ENCODE measurements at regions of chr3 and their contacts with region 1.

Region 1: DNA sequence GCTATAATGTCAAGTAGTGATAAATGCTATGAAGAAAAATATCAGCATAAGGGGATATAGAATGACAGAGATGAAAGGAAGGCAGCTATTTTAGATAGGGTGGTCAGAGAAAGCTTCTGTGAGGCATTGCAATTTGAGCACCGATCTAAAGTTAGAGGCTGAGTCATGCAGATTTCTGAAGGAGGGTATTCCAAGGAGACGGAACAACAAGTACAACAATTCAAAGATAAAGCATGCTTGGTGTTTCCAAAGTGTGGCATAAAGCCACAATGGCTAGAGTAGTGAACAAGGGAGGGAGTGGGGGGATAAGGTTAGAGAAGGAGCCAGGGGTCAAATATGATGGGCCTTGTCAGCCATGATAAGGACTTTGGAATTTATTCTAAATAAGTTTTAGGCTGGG is 71.9 kb downstream of the PFN2 start:
- DNase-seq: no peak
- H3K4me3 ChIP-seq: no peak overlapping the region
- H3K27ac ChIP-seq: peak overlapping the region in 44 of 59 donors; percentile 2 to 74 (median 42)
- H3K27me3 ChIP-seq: no peaks in the 10 kb centered on the region
- CTCF ChIP-seq: no peak

Region 2: GRCh38 chr3:149812606-149813366 is 86.0 kb before region 1 on chr3 and contains the start of gene RNF13:
- intact Hi-C with region 1: loop called in 1 of 2 experiments (anchors 5 kb)
- DNase-seq: peak; percentile 98 to 100 (median 99)
- H3K4me3 ChIP-seq: peak within 1 kb of the TSS; percentile 53 to 96 (median 88)
- H3K27ac ChIP-seq: peak within 1 kb of the TSS; percentile 95 to 100 (median 99)
- H3K27me3 ChIP-seq: no peaks in the 10 kb centered on the region
- CTCF ChIP-seq: peak in 7 of 56 donors; percentile 6 to 38 (median 13)
- total RNA-seq, gene RNF13: 80.2 to 336 (median 136) TPM

Measured in dorsolateral prefrontal cortex (tissue), 120 donors.